Activated naive CD4-positive, alpha-beta T cell treated with anti-CD3 and anti-CD28 coated beads for 36 hours (primary cell): ENCODE measurements at regions of chr14 and their contacts with region 1.

Region 1: DNA sequence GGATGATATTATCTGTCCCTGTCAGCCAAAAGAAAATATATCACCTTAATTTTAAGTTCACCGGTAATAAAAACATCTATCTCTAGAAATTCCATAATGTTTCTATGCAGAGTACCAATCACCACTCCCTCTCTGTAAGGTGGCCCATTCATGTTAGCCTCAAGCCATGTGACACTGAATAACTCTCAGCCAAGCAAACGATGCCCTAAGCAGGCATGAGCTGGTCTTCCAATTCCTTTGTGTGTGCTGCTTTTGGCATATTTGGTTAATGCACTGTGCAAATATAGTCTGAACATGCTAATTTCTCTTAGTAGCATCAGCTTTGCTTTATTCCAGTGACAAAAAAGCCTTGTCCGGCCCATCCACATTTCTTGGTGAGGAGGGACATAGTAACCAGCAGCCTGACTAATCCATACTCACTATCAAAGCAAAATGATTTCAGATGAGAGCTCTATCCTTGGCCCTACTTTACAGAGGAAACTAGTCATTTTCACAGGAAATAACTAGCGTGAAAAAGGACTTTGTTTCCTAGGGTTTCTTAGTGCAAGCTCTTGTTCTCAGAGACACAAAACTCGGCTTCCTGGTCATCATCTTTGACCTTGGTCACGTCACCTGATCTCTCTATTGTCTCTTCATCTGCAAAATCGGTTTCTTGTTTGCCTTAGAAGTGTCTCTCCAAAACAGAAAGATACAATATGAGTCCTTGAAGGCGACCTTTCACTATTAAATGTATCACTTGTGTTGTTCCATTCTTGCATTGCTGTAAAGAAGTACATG is 59.3 kb upstream of the RTRAF start:
- DNase-seq: no peak
- H3K4me3 Mint-ChIP-seq: no peak overlapping the region
- H3K27ac Mint-ChIP-seq: peak overlapping the region; percentile 20
- H3K4me1 Mint-ChIP-seq: peaks cover 61% of the 10 kb centered on the region
- H3K27me3 Mint-ChIP-seq: no peaks in the 10 kb centered on the region

Region 2: GRCh38 chr14:51873221-51873893 is 56.7 kb before region 1 on chr14:
- CTCF ChIA-PET with region 1: interaction called, 3 read pairs
- intact Hi-C with region 1: loop called (anchors 1 kb)
- DNase-seq: peak; percentile 79
- H3K4me3 Mint-ChIP-seq: peak overlapping the region; percentile 34
- H3K27ac Mint-ChIP-seq: peak overlapping the region; percentile 84
- H3K4me1 Mint-ChIP-seq: peaks cover 66% of the 10 kb centered on the region
- H3K27me3 Mint-ChIP-seq: no peaks in the 10 kb centered on the region

Region 3: DNA sequence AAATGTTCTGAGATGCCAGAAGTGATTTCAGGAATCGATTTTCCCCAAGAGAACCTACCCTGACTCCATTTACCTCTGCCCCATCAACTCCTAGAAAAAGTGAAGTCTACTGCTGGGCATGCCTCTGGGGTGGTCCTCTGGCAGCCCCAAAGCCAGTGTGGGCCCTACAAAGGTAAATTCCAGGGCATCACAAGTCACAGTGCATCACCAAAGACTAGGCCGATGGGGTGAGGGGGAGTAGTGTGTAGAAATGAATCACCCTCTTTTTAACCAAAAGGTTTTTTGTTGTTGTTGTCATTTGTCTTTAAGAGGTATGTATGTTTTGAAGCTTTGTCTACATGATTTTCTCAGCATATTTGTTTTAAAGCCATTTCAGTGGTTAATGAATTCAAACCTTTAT is 12.9 kb after region 1 on chr14:
- CTCF ChIA-PET with region 1: no interaction called
- intact Hi-C with region 1: no loop called
- DNase-seq: no peak
- H3K4me3 Mint-ChIP-seq: no peak overlapping the region
- H3K27ac Mint-ChIP-seq: no peak overlapping the region
- H3K4me1 Mint-ChIP-seq: peaks cover 35% of the 10 kb centered on the region
- H3K27me3 Mint-ChIP-seq: no peaks in the 10 kb centered on the region